HAP-1 (cell line): ENCODE measurements at regions of chr14 and their contacts with region 1.

Region 1: GRCh38 chr14:80987235-80988032 is 32.0 kb downstream of the TSHR start:
- DNase-seq: peak; percentile 58 to 72
- H3K4me3 ChIP-seq: no peak overlapping the region
- H3K4me1 ChIP-seq: no peaks in the 10 kb centered on the region
- H3K27me3 ChIP-seq: peaks cover 12% of the 10 kb centered on the region

Region 2: DNA sequence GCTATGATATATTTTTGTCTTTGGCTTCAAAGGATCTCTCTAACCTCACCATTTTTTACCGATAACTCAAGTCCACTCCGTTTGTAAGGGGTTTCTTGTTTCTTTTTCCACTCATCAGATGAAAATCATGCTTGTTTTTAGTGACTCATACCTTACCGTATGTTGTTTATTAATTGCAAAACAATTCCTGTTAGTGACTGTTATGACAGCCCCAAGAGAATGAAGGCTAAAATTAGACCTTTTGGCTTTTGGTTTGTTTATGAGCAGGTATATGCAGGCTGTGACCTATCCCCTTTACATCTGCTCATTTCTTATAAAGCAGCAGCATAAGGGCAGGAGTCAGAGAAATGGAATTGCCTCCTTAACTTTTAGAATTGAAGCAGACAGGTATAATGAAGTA is 365.7 kb before region 1 on chr14:
- in situ Hi-C with region 1: no loop called
- DNase-seq: no peak
- H3K4me3 ChIP-seq: no peak overlapping the region
- H3K4me1 ChIP-seq: no peaks in the 10 kb centered on the region
- H3K27me3 ChIP-seq: no peaks in the 10 kb centered on the region

Region 3: GRCh38 chr14:81170104-81170828 is 182.8 kb after region 1 on chr14:
- in situ Hi-C with region 1: loop called (anchors 25 kb)
- DNase-seq: peak; percentile 85 to 92
- H3K4me3 ChIP-seq: peak overlapping the region; percentile 35
- H3K4me1 ChIP-seq: peaks cover 11% of the 10 kb centered on the region
- H3K27me3 ChIP-seq: no peaks in the 10 kb centered on the region

Region 4: DNA sequence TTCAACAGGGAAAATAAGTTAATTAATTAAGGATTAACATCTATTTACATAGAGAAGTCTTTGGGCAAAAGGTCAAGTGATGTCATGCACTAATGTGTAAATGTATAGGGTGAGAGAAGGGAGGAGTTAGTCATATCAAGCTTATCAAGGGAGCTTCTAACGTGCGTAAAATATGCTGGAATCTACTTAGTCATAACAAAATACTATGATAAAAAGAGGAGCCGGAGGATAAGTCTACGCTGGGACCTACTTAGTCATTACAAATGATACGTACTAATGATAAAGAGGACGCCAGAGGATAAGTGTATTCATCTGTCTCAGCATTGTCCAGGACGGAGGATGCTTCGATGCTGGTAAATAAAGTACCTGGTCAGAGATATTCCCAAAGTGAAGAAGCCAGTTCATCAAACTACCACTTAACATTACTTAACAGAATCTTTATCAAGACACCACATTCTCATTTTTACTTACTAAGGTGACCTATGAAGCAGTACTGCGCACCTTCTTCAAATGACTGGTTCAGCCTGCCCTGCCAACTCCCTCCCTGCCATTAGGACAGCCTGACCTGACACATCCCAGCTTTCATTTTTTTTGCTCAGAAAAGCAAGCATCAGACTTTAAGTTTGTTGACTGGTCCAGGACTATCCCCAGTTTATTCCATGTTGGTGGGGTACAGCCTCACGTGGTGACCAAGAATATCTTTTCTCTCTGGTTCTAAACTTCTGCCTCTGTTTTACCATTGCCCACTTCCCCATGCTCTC is 299.8 kb after region 1 on chr14:
- in situ Hi-C with region 1: no loop called
- DNase-seq: no peak
- H3K4me3 ChIP-seq: no peak overlapping the region
- H3K4me1 ChIP-seq: peaks cover 5% of the 10 kb centered on the region
- H3K27me3 ChIP-seq: no peaks in the 10 kb centered on the region